Heart left ventricle (tissue), 16 donors: ENCODE measurements at regions of chr12 and their contacts with region 1.

Region 1: GRCh38 chr12:4991373-4991772 is 52.3 kb upstream of the KCNA5 start:
- DNase-seq: no peak
- ATAC-seq: no peak
- H3K4me3 ChIP-seq: no peak overlapping the region
- H3K27ac ChIP-seq: no peak overlapping the region
- H3K4me1 ChIP-seq: no peaks in the 10 kb centered on the region
- H3K27me3 ChIP-seq: peaks cover 0 to 31% (median 0%) of the 10 kb centered on the region in 9 donors
- CTCF ChIP-seq: no peak
- POLR2A ChIP-seq: no peak

Region 2: DNA sequence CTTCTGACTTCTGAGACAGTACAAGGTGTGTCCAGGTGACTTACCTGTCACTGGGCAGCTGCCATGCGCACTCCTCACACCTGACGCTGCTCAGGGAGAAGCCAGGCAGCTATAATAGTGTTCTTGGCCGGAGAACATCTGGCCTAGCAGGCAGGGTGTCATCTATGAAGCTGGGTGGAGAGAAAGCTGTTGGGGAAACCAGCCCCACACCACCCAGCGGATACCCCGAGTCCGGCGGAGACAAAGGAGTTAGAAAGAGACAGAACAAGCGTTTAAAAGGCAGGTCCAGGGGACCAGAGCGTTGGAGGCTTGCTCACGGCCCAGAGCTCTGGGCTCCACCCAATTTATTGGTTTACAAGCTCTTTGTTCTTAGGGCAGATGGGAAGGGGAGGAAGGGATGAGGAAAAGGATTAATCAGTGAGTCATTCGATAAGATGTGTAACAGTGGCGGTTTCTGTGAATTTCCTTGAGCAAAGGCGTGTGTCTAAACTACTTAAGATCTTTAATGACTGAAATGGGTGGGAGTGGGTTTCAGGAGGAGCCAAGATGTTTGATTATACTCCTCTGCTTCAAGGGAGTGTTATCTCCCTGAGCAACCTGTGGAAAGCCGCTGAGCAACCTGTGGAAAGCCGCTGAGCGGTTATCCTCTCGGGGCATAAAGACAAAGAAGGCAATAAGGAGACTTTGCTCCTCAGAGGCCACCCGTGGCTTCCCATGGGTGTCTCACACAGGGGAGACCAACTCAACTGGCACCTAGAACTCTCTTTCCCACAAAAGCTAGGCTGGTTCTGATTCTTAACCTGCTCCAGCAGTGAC is 271.3 kb before region 1 on chr12 and contains the start of gene GALNT8:
- intact Hi-C with region 1: no loop called
- DNase-seq: no peak
- ATAC-seq: no peak
- H3K4me3 ChIP-seq: no peak within 1 kb of the TSS
- H3K27ac ChIP-seq: no peak within 1 kb of the TSS
- H3K4me1 ChIP-seq: no peaks in the 10 kb centered on the region
- H3K27me3 ChIP-seq: peaks cover 0 to 11% (median 0%) of the 10 kb centered on the region in 9 donors
- CTCF ChIP-seq: no peak
- POLR2A ChIP-seq: no peak
- total RNA-seq, gene GALNT8: 0.35 to 2.6 (median 0.96) TPM

Region 3: GRCh38 chr12:4956054-4956453 is 35.3 kb before region 1 on chr12:
- intact Hi-C with region 1: loop called in 1 of 10 experiments (anchors 5 kb)
- DNase-seq: no peak
- ATAC-seq: no peak
- H3K4me3 ChIP-seq: no peak overlapping the region
- H3K27ac ChIP-seq: no peak overlapping the region
- H3K4me1 ChIP-seq: peaks cover 0 to 8% (median 0%) of the 10 kb centered on the region in 12 donors
- H3K27me3 ChIP-seq: peaks cover 0 to 33% (median 0%) of the 10 kb centered on the region in 9 donors
- CTCF ChIP-seq: no peak
- POLR2A ChIP-seq: no peak

Region 4: DNA sequence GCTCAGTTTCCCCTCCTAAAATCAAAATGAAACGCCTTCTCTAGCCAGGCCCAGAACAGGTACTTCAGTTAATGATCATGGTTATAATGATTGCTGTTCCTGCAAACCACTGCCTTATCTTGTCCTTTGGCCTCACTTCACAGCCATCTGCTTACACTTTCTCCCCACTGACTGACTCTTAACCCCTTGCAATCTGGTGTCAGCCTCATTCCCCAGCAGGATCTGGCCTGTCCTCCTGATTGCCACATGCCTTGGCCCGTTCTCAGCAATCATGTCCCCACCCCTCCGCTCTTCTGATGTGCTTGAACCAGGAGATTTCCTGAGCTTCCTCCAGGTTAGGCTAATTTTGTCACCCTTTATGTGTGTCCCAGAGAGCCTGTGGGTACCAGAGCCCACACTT is 17.2 kb before region 1 on chr12:
- intact Hi-C with region 1: no loop called
- DNase-seq: no peak
- ATAC-seq: no peak
- H3K4me3 ChIP-seq: no peak overlapping the region
- H3K27ac ChIP-seq: no peak overlapping the region
- H3K4me1 ChIP-seq: peaks cover 0 to 3% (median 0%) of the 10 kb centered on the region in 12 donors
- H3K27me3 ChIP-seq: peaks cover 0 to 14% (median 4%) of the 10 kb centered on the region in 9 donors
- CTCF ChIP-seq: no peak
- POLR2A ChIP-seq: no peak